ENCODE measurements at regions of chr11 and their contacts with region 1.

Region 1: GRCh38 chr11:1515082-1516060 is 28.8 kb upstream of the MOB2 start:
- H3K4me3 ChIP-seq: no peak overlapping the region
- H3K27ac ChIP-seq: no peak overlapping the region
- H3K4me1 ChIP-seq: no peaks in the 10 kb centered on the region
- CTCF ChIP-seq: peak; percentile 80

Region 2: DNA sequence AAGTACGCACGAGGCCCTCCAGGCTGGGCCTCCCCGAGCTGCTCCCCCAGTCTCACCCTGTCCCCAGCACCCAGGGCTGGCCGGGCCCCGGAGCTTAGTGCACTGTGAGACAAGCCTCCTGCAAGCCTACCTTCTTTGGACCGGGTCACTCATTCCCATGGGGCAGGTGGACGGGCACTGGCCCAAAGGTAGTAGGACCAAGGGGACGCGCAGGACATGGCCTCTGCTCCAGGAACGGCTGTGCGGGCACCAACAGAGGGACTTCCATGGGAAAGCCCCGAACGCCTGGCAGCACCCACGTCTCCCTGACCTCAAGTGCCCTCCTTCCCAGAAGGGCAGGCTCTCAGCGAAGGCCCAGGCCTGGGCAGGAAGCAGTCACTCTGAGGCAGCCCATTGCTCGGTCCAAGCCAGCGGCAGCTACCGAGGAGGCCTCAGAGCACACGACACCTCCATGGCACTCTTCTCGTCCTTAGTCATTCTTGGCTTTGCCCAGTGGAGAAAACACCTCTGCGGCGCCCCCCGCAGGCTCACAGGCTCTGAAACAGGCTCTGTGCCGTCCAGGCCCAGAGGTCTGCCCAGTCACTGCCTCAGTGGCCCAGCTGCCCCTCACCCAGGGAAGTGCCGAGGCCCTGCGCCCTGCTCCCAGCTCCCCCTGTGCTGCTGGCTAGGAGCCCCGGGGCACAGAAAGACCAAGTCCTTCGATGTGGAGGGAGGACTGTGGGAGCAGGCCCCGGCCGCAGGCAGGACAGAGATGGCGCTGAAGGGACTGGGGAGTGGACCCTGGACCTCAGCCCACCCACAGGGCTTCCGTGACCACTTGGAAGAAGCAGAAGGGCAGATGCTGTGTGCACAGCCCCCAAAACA is 32.6 kb before region 1 on chr11:
- CTCF ChIA-PET with region 1: no interaction called
- POLR2A ChIA-PET with region 1: no interaction called
- H3K4me3 ChIP-seq: no peak overlapping the region
- H3K27ac ChIP-seq: no peak overlapping the region
- H3K4me1 ChIP-seq: no peaks in the 10 kb centered on the region; the same call in 1 of the 2 replicates
- CTCF ChIP-seq: 0 out of 2 replicates have a peak, but pooled peaks have one; percentile 9

Region 3: DNA sequence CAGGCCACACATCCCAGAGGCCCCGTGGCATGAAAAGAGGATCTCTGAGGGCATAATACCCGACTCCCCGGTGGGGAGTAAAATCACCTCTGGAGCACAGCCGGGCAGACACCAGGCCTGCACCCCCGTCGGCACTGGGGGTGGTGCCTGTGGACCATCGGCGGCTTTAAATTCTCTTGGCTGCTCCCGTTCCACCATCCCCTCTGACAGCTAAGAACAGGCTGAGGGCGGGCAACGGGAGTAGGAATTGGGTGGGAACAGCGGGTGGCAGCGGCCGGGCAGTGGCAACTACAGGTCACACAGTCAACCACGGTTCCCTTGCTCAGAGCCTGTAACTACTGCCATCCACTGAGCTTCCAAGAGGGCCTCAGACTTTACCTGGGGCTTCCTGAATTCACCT is 11.4 kb after region 1 on chr11:
- CTCF ChIA-PET with region 1: interaction called, 17 read pairs
- POLR2A ChIA-PET with region 1: no interaction called
- H3K4me3 ChIP-seq: no peak overlapping the region
- H3K27ac ChIP-seq: no peak overlapping the region
- H3K4me1 ChIP-seq: no peaks in the 10 kb centered on the region
- CTCF ChIP-seq: no peak